ENCODE measurements at regions of chr9 and their contacts with region 1.

Region 1: GRCh38 chr9:122453677-122454135 is 24.0 kb downstream of the OR1J1 start:
- DNase-seq: no peak
- H3K4me3 ChIP-seq: no peak overlapping the region
- H3K27ac ChIP-seq: no peak overlapping the region
- H3K4me1 ChIP-seq: no peaks in the 10 kb centered on the region
- H3K27me3 ChIP-seq: no peaks in the 10 kb centered on the region

Region 2: GRCh38 chr9:122356627-122357026 is 97.1 kb before region 1 on chr9:
- CTCF ChIA-PET with region 1: interaction called, 13 read pairs
- POLR2A ChIA-PET with region 1: interaction called, 4 read pairs
- DNase-seq: no peak
- H3K4me3 ChIP-seq: no peak overlapping the region
- H3K27ac ChIP-seq: no peak overlapping the region
- H3K4me1 ChIP-seq: peaks cover 0 to 20% (median 10%) of the 10 kb centered on the region in 4 experiments
- H3K27me3 ChIP-seq: no peaks in the 10 kb centered on the region

Region 3: GRCh38 chr9:122464633-122465567 is 11.2 kb after region 1 on chr9:
- CTCF ChIA-PET with region 1: interaction called, 11 read pairs
- POLR2A ChIA-PET with region 1: no interaction called
- DNase-seq: peak; percentile 87 to 92 (median 92)
- H3K4me3 ChIP-seq: peak overlapping the region in 6 of 7 experiments; percentile 62 to 87 (median 71)
- H3K27ac ChIP-seq: peak overlapping the region in 1 of 2 experiments; percentile 75
- H3K4me1 ChIP-seq: peaks cover 0 to 10% (median 6%) of the 10 kb centered on the region in 4 experiments
- H3K27me3 ChIP-seq: no peaks in the 10 kb centered on the region